GM10248 (cell line): ENCODE measurements at regions of chr19 and their contacts with region 1.

Region 1: GRCh38 chr19:2543463-2544442 is 67.8 kb downstream of the GADD45B start:
- DNase-seq: peak; percentile 76
- CTCF ChIP-seq: no peak

Region 2: GRCh38 chr19:2273356-2274184 is 270.2 kb before region 1 on chr19:
- CTCF ChIA-PET with region 1: no interaction called
- POLR2A ChIA-PET with region 1: no interaction called
- DNase-seq: peak; percentile 90
- CTCF ChIP-seq: peak; percentile 95

Region 3: DNA sequence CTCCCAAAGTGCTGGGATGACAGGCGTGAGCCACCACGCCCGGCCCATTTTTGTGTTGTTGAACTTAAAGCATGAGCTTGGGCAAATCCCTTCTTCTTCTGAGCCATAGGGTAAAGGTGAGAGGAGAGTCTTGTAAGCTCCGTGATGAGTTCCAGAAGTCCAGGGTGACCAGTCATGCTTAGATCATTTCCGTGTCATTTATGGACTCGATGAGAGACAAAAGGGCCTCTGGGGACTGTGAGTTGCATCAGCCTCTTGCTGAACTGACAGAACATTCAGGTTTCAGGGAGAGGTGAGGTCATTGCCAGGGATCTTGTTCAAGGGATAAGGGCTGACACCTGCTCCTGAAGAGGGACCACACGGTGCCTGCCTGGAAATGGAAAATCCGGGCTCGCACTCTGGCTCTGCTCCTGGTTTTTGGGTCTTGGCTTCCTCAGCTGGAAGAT is 14.3 kb before region 1 on chr19:
- CTCF ChIA-PET with region 1: interaction called, 16 read pairs
- POLR2A ChIA-PET with region 1: no interaction called
- DNase-seq: peak; percentile 54
- CTCF ChIP-seq: no peak

Region 4: DNA sequence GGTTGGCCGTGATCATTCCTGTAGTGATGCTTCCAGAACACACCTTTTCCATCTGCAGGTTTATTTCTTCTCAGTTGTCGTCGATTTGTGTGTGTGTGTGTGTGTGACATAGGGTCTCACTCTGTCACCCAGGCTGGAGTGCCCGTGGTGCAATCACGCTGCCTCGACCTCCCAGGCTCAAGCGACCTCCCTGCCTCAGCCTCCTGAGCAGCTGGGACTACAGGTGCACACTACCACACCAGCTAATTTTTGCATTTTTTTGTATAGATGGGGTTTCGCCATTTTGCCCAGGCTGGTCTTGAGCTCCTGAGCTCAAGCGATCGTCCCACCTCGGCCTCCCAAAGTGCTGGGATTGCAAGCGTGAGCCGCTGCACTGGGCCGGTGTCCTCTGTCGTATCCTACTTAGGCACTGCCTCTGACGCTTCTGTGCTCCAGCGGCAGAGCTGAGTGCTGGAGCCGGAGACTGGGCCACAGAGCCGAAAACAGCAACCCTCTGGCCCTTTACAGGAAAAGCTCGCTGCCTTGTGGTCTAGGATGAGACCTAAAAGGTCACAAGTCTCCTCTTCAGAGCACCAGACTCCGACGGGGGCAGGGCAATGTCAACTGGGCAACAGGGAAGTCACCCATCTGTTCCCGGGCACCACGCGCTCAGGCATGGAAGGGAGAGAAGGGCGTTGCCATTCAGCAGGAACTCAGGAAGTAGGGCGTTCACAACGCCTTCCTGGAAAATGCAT is 23.7 kb after region 1 on chr19:
- CTCF ChIA-PET with region 1: no interaction called
- POLR2A ChIA-PET with region 1: no interaction called
- DNase-seq: no peak
- CTCF ChIP-seq: no peak